ENCODE measurements at regions of chr6 and their contacts with region 1.

Region 1: DNA sequence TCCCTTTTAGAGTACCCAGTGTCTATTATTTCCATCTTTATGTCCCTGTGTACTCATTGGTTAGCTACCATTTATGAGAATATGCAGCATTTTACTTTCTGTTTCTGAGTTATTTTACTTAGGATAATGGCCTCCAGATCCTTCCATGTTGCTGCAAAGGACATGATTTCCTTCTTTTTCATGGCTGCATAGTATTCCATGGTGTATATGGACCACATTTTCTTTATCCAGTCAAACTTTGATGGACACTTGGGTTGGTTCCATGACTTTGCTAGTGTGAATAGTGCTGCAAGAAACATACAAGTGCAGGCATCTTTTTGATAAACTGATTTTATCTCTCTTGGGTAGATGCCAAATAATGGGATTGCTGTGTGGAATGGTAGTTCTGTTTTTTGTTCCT is 55.4 kb downstream of the ZBTB2 start:
- DNase-seq: no peak
- H3K4me3 ChIP-seq: no peak overlapping the region
- H3K4me3 Mint-ChIP-seq: no peak overlapping the region
- H3K27ac ChIP-seq: no peak overlapping the region
- H3K27ac Mint-ChIP-seq: no peak overlapping the region
- H3K4me1 ChIP-seq: no peaks in the 10 kb centered on the region
- H3K4me1 Mint-ChIP-seq: peaks cover 3 to 5% (median 5%) of the 10 kb centered on the region in 3 donors
- H3K27me3 ChIP-seq: no peaks in the 10 kb centered on the region
- H3K27me3 Mint-ChIP-seq: peaks cover 0 to 9% of the 10 kb centered on the region in 2 donors

Region 2: GRCh38 chr6:151323791-151324487 is 12.0 kb before region 1 on chr6:
- CTCF ChIA-PET with region 1: interaction called, 39 read pairs
- POLR2A ChIA-PET with region 1: no interaction called
- DNase-seq: peak; percentile 59 to 76 (median 62)
- H3K4me3 ChIP-seq: no peak overlapping the region
- H3K4me3 Mint-ChIP-seq: peak overlapping the region; percentile 45 to 72 (median 62)
- H3K27ac ChIP-seq: no peak overlapping the region
- H3K27ac Mint-ChIP-seq: peak overlapping the region in 1 of 8 donors; percentile 57
- H3K4me1 ChIP-seq: peaks cover 10% of the 10 kb centered on the region
- H3K4me1 Mint-ChIP-seq: peaks cover 20 to 27% (median 24%) of the 10 kb centered on the region in 3 donors
- H3K27me3 ChIP-seq: peaks cover 20% of the 10 kb centered on the region
- H3K27me3 Mint-ChIP-seq: peaks cover 43 to 69% of the 10 kb centered on the region in 2 donors